ENCODE measurements at regions of chr10 and their contacts with region 1.

Region 1: GRCh38 chr10:6014241-6014761 is 37.0 kb upstream of the IL15RA start:
- DNase-seq: peak; percentile 59
- ATAC-seq: peak; percentile 81
- H3K4me3 ChIP-seq: peak overlapping the region; percentile 40
- H3K27ac ChIP-seq: no peak overlapping the region
- H3K4me1 ChIP-seq: no peaks in the 10 kb centered on the region
- H3K27me3 ChIP-seq: no peaks in the 10 kb centered on the region
- CTCF ChIP-seq: peak; percentile 67

Region 2: DNA sequence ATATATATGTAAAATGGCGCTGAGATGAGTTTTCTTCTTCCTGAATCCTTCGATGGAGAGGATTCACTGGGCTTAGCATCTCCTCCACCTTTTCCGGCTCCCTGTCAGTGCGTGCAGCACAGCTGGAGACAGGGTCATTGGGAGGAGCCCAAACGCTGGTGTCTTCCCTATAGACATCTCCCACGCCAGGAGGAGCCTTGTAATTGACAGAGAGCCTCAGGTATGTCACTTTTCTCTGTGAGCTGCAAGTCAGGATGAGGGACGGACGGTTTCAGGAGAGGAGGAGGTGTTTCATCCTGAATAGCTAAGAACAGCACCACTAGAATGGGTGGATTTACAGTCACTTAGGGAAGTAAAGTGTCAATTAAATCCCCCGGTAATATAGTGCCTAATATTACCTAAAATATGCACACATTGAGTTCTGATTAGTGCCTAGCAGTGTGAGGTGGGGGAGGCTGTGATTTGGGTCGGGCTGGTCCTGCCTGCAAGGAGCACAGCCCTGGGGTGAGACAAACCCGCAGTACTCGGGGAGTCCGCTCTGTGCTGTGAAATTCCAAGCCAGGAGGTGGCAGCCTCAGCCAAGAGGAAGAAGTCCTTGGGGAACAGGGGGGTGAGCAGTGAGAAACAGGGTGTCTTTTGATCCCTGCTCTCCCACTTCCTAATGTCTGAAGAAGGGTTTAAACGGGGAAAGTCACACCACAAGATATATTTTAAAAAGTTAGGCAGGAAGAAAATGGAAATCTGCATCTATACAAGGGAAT is 65.1 kb before region 1 on chr10:
- CTCF ChIA-PET with region 1: interaction called, 4 read pairs
- POLR2A ChIA-PET with region 1: no interaction called
- intact Hi-C with region 1: loop called (anchors 2 kb)
- DNase-seq: peak; percentile 54
- ATAC-seq: peak; percentile 42
- H3K4me3 ChIP-seq: no peak overlapping the region
- H3K27ac ChIP-seq: no peak overlapping the region
- H3K4me1 ChIP-seq: peaks cover 30% of the 10 kb centered on the region
- H3K27me3 ChIP-seq: no peaks in the 10 kb centered on the region
- CTCF ChIP-seq: peak; percentile 61